ENCODE measurements at regions of chr11 and their contacts with region 1.

Region 1: DNA sequence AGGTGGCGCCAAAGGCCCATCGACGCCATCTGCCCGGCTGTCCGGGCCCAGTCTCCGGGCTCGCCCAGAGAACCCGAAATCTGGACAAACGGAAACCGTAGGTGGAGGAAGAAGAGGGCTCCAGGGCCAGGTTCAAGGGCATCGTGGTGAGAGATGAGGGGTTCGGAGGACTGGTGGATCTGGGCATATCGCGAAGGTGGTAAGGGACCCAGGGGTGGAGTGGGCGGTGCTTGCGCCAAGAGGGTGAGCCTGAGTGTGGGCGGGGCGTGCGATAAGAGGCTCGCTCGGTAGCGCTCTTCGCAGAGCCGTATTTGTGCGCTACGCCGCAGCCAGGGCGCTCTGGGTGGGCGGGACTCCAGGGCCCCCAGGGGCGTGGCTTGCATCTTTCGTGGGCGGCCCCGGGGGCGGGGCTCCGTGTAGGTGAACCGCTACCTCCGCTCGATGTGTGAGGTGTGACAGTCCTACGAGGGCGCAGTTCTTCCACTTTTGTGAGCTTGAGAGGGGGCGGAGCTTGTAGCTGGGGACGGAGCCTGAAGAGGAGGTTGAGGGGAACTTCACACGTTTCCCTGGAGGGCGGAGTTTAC is 4.8 kb downstream of the CD248 start:
- DNase-seq: peak; percentile 95
- ATAC-seq: peak; percentile 69
- H3K4me3 ChIP-seq: peak overlapping the region; percentile 57 to 78 (median 59); a peak in 5 of 6 replicates
- H3K27ac ChIP-seq: peak overlapping the region; percentile 97
- H3K4me1 ChIP-seq: peaks cover 42% of the 10 kb centered on the region
- H3K27me3 ChIP-seq: peaks cover 0 to 3% of the 10 kb centered on the region in 2 experiments; a peak in 1 of 5 replicates
- CTCF ChIP-seq: peak; percentile 96
- EP300 ChIP-seq: no peak
- POLR2A ChIP-seq: peak in 1 of 2 experiments; percentile 62; a peak in 1 of 4 replicates
- RAD21 ChIP-seq: peak; percentile 99

Region 2: DNA sequence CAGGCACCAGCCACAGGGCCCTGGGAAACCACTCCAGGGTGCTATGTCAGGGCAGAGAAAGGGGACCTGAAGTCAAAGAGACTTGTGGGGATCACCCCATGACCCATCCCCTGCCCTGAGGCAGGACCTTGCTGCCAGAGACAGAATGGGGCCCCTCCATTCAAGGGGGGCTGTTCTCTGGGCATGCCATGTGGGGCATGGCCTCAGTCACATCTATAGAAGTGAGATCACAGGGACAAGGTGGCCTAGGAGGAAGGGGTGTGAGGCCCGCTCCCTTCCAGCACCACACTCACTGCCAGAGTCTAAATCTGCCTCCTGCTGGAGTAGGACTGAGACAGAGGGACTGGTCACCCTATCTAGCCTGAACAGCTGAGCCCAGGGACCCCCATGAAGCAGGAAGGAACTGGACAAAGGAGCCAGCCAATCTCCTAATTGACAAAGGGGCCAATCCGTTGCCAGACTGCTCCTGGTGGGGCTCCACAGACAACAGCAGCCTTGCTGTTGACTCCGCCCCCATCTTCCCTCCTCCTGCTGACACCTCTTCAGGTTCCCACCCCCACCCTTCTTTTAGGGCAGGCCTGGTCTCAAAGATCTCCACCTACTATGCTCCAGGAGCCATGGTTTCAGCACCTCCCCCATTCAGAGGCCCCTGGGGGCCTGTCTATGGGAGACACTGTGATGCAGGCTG is 863.5 kb before region 1 on chr11:
- CTCF ChIA-PET with region 1: no interaction called
- POLR2A ChIA-PET with region 1: no interaction called
- in situ Hi-C with region 1: no loop called
- intact Hi-C with region 1: no loop called
- DNase-seq: no peak
- ATAC-seq: peak; percentile 18
- H3K4me3 ChIP-seq: no peak overlapping the region
- H3K27ac ChIP-seq: no peak overlapping the region
- H3K4me1 ChIP-seq: peaks cover 48% of the 10 kb centered on the region
- H3K27me3 ChIP-seq: no peaks in the 10 kb centered on the region
- CTCF ChIP-seq: no peak
- EP300 ChIP-seq: no peak
- POLR2A ChIP-seq: peak in 1 of 2 experiments; percentile 50; a peak in 1 of 4 replicates
- RAD21 ChIP-seq: no peak

Region 3: GRCh38 chr11:66242095-66242765 is 69.8 kb before region 1 on chr11:
- CTCF ChIA-PET with region 1: no interaction called
- POLR2A ChIA-PET with region 1: no interaction called
- in situ Hi-C with region 1: no loop called
- intact Hi-C with region 1: no loop called
- DNase-seq: no peak
- ATAC-seq: no peak
- H3K4me3 ChIP-seq: no peak overlapping the region
- H3K27ac ChIP-seq: no peak overlapping the region
- H3K4me1 ChIP-seq: no peaks in the 10 kb centered on the region
- H3K27me3 ChIP-seq: no peaks in the 10 kb centered on the region
- CTCF ChIP-seq: no peak
- EP300 ChIP-seq: no peak
- POLR2A ChIP-seq: no peak
- RAD21 ChIP-seq: no peak

Region 4: GRCh38 chr11:66268283-66268951 is 43.6 kb before region 1 on chr11 and contains the start of gene RAB1B:
- CTCF ChIA-PET with region 1: no interaction called
- POLR2A ChIA-PET with region 1: interaction called, 15 read pairs
- in situ Hi-C with region 1: no loop called
- intact Hi-C with region 1: no loop called
- DNase-seq: peak; percentile 98
- ATAC-seq: peak; percentile 87
- H3K4me3 ChIP-seq: peak within 1 kb of the TSS; percentile 89 to 98 (median 96)
- H3K27ac ChIP-seq: peak within 1 kb of the TSS; percentile 78
- H3K4me1 ChIP-seq: peaks cover 13% of the 10 kb centered on the region
- H3K27me3 ChIP-seq: no peaks in the 10 kb centered on the region; a peak in 1 of 5 replicates
- CTCF ChIP-seq: no peak
- EP300 ChIP-seq: no peak
- POLR2A ChIP-seq: peak; percentile 42 to 62; a peak in 3 of 4 replicates
- RAD21 ChIP-seq: peak; percentile 27; the same call in 1 of the 2 replicates
- total RNA-seq, gene RAB1B: 73.7 and 77.9 TPM in 2 replicates

Region 5: GRCh38 chr11:66299186-66299585 is 12.9 kb before region 1 on chr11:
- CTCF ChIA-PET with region 1: no interaction called
- POLR2A ChIA-PET with region 1: interaction called, 14 read pairs
- in situ Hi-C with region 1: no loop called
- intact Hi-C with region 1: no loop called
- DNase-seq: no peak
- ATAC-seq: peak; percentile 20; the same call in 1 of the 3 replicates
- H3K4me3 ChIP-seq: no peak overlapping the region
- H3K27ac ChIP-seq: no peak overlapping the region
- H3K4me1 ChIP-seq: 0 out of 2 replicates have a peak, but pooled peaks cover 6% of the 10 kb centered on the region
- H3K27me3 ChIP-seq: peaks cover 3 to 19% of the 10 kb centered on the region in 2 experiments; a peak in 4 of 5 replicates
- CTCF ChIP-seq: no peak
- EP300 ChIP-seq: no peak
- POLR2A ChIP-seq: no peak
- RAD21 ChIP-seq: no peak

Region 6: DNA sequence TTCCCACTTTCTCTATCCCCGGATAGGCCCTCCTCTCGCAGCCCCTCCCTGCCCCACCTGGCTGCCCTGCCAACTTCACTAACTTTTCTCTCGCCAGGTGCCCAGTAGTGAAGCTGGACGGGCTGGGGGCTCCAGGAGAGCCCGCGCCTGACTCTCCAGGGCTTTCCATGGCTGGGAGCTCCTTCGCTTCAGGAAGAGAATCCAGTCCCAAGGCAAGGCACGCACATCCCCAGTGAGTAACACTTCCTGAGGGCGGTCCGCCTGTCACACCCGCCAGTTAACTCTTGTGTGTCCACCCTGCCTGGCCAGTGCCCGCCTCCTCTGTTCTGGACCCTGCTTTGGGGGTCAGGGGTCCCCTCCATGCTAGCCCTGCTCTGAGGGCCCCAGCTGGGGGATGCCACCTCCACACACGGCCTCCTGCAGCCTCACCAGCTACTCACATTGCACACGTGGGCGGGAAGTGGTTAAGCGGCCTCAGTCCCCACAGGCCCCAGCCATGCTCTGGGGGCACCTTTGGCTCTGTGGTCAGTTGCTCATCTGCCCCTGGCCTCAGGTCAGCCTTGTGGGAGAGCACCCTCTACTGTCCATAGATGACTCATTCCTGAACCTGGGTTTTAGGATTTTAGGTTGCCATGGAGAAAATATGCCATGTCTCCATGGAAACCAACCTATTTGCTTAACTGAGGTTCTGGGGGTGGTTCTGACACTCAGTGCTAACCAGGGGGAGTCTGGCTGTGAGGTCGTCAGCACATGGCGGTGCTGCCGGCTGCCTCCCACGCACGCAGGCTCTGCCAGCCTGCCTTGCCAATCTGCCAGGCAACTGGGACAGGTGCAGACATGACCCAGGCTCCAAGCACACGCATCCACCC is 24.4 kb after region 1 on chr11 and contains the start of gene RIN1:
- CTCF ChIA-PET with region 1: interaction called, 32 read pairs
- POLR2A ChIA-PET with region 1: interaction called, 59 read pairs
- in situ Hi-C with region 1: no loop called
- intact Hi-C with region 1: loop called (anchors 1 kb)
- DNase-seq: peak; percentile 89
- ATAC-seq: peak; percentile 91
- H3K4me3 ChIP-seq: peak within 1 kb of the TSS; percentile 64 to 79 (median 70)
- H3K27ac ChIP-seq: peak within 1 kb of the TSS; percentile 63
- H3K4me1 ChIP-seq: peaks cover 19% of the 10 kb centered on the region
- H3K27me3 ChIP-seq: no peaks in the 10 kb centered on the region
- CTCF ChIP-seq: peak; percentile 95
- EP300 ChIP-seq: peak; percentile 11 to 74; a peak in 2 of 4 replicates
- POLR2A ChIP-seq: 0 out of 4 replicates have a peak, but pooled peaks of 1 of the 2 experiments have one; percentile 29
- RAD21 ChIP-seq: peak; percentile 94
- total RNA-seq, gene RIN1: 3.9 and 4.1 TPM in 2 replicates

Region 7: DNA sequence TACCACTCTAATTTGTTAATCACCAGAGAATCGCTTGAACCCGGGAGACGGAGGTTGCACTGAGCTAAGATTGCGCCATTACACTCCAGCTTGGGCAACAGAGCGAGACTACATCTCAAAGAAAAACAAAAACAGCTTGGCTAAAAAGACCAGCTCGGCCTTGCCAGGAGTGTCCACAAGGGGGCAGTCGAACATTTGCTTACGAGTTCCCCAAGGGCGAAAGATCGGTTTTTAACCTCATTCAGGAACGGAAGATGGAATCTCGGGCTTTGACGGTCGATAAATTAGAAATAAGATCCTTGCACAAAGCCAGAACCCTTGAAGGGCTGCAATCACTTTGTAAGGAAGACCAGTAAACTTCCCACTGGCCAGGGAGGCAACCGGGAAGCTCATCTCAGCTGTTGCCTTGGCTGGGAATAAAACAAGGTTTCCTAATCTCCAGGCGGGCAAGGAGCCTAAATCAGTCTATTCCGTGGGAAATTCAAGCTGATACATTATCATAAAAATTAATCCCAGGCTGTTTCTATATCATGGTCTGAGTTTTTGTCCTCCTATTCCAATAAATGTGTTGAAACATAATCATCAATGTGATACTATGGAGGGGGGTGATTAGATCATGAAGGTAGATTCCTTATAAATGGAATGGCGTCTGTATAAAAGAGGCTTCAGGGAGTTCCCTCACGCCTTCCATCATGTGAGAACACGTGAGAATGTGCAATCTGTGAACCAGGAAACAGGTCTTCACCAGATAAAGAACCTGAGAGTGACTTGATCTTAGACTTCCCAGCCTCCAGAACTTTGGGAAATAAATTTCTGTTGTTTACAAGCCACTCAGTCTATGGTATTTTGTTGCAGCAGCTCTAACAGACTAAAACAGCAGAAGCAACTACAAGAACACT is 74.4 kb after region 1 on chr11:
- CTCF ChIA-PET with region 1: interaction called, 4 read pairs
- POLR2A ChIA-PET with region 1: interaction called, 7 read pairs
- in situ Hi-C with region 1: no loop called
- intact Hi-C with region 1: loop called (anchors 10 kb)
- DNase-seq: peak; percentile 66
- ATAC-seq: peak; percentile 66
- H3K4me3 ChIP-seq: peak overlapping the region in 2 of 3 experiments; percentile 41 to 65; a peak in 4 of 6 replicates
- H3K27ac ChIP-seq: no peak overlapping the region
- H3K4me1 ChIP-seq: peaks cover 20% of the 10 kb centered on the region
- H3K27me3 ChIP-seq: peaks cover 0 to 5% of the 10 kb centered on the region in 2 experiments; a peak in 1 of 5 replicates
- CTCF ChIP-seq: peak; percentile 85
- EP300 ChIP-seq: no peak
- POLR2A ChIP-seq: no peak
- RAD21 ChIP-seq: no peak; the same call in 1 of the 2 replicates

Region 8: DNA sequence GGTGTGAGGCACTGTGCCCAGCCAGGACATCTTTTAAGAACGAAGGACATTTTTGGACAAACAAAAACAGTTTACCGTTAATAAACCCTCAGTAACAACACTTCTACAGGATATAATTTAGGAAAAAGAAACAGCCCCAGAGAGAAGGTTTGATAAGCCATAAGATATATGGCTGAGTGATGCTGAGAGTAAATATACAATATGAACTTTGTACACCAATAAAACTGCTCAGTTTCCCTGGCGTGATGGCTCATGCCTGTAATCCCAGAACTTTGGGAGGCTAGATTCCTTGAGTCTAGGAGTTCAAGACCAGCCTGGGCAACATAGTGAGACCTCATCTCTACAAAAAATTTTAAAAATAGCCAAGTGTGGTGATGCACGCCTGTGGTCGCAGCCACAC is 186.4 kb after region 1 on chr11:
- CTCF ChIA-PET with region 1: no interaction called
- POLR2A ChIA-PET with region 1: no interaction called
- in situ Hi-C with region 1: no loop called
- intact Hi-C with region 1: no loop called
- DNase-seq: no peak
- ATAC-seq: no peak
- H3K4me3 ChIP-seq: no peak overlapping the region
- H3K27ac ChIP-seq: no peak overlapping the region
- H3K4me1 ChIP-seq: no peaks in the 10 kb centered on the region
- H3K27me3 ChIP-seq: no peaks in the 10 kb centered on the region
- CTCF ChIP-seq: no peak
- EP300 ChIP-seq: no peak
- POLR2A ChIP-seq: no peak
- RAD21 ChIP-seq: no peak